Posterior cingulate gyrus (tissue), 11 donors: ENCODE measurements at regions of chrX and their contacts with region 1.

Region 1: GRCh38 chrX:151151665-151152267 is 24.6 kb upstream of the GPR50 start:
- DNase-seq: peak in 4 of 10 donors; percentile 15 to 74 (median 31)

Region 2: DNA sequence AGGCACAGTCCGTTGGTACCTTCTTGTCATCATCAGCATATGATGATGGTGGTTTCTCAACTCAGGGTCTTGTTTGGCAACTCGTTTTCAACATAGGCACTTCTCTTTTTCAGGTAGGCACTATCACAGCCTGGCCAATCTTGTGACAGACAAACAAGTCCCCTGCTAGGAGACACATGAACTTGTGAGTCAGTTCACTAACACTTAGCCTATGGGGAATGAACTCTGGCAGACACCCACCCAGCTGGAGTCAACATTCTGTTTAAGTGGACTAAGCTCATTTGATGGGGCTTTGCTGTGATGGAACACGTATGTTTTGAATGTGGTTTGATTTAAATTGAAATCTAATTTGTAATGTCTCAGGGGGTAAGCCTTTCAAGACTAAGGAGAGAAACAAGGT is 889.3 kb before region 1 on chrX:
- intact Hi-C with region 1: no loop called
- DNase-seq: no peak

Region 3: DNA sequence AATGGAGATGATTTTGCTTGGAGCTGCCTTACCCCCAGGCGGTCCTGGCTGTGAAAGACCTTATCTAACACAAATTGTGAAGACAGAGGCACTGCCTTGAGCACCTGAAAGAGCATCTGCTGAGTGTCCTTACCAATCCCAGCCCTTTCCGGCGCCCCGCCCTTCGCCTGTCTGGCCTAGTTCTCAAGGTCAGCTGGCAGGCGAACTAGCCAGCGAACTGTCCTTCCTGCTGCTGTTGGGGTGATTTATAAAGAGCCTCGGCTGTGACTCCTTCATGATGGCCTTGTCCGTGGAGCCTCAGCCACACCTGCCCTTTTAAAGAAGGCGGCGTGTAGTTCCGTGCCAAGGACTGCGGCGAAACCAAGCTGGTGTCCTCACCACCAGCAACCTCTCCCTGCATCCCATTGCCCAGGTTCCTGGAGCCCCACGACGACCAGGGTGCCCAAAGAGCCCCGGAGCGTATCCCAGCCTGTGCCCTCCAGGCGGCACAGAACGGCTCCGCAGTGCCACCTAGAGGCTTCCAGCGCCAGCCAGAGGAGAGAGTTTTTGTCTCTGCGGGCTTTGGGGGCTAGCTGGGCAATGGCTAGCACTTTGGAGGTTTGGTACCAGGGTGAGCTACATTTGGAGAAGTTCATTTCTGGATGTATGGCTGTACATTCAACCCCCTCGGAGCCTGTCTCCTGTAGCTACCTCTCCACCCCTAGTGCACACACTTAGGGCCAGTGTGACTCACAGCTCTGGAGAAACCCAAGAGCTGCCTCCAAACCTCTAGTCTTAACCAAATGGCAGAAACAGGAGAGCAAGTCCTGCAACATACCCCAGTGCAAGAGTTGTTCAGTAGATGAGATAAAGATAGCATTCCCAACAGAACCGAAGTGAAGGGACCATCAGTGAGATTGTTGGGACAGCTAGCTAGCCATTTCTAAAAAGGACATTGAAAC is 208.4 kb after region 1 on chrX:
- intact Hi-C with region 1: loop called (anchors 10 kb)
- DNase-seq: peak in 6 of 10 donors; percentile 11 to 88 (median 27)

Region 4: DNA sequence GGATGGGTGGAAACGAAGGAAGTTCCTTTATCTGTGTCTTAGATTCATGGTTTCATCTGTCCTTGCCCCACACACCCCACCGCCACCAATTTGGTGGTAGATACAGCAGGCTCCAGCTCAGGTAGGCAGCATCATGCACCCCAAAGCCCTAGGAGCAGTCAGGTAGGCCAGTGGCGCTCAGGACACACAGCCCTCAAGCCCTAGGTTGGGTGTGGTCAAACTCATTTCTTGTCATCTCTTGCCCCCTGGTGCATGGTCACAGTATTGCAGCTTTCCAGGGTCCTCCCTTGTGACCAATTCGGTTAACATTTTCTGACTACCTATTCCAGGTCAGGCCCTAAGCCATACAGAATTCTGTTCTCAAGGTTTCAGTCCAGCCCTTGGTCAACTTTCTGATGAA is 529.0 kb after region 1 on chrX:
- intact Hi-C with region 1: loop called (anchors 1 kb)
- DNase-seq: peak in 6 of 10 donors; percentile 30 to 58 (median 43)

Region 5: GRCh38 chrX:152632445-152633097 is 1480.8 kb after region 1 on chrX:
- intact Hi-C with region 1: loop called (anchors 10 kb)
- DNase-seq: peak in 9 of 10 donors; percentile 30 to 91 (median 68)